Activated CD8-positive, alpha-beta T cell treated with anti-CD3 and anti-CD28 coated beads for 36 hours (primary cell): ENCODE measurements at regions of chr14 and their contacts with region 1.

Region 1: DNA sequence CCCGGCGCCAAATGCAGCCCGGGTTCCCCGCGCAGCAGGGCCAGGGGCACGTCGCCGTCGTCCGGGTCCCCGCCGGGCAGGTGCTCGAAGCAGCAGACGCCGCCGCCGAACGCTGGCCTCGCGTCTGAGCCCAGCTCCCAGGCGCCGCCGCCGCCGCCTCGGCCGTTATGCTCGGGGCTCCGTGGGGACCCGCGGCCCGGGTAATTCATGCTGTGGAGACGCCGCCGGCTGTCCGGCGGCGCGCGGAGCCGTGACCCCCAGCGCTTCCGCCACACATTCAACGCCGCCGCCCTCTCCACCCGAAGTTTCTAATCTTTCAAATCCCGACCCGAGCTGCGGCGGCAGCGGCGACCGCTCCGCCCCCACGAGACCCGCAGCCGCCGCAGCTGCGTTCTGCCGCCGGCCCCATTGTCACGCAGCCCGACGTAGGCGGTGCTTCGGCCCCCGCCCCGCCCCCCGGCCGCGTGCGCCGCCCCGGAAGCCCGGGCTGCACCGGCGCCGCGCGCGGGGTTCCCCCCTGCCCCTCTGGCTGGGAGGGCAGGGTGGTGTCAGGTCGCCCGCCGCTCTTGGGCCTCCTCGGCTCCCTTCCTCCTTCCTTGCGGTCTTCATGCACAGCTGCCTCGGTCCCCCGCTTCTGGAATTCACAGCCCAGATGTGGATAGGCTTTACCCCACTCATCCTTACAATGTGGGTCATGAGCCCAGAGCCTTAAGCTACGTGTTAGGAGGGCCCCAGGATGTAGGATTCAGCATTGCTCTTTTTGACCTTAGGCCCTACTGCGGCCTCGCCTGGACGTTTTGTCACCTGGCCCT is at the start of gene DDHD1:
- DNase-seq: peak; percentile 83
- ATAC-seq: peak; percentile 82
- H3K4me3 Mint-ChIP-seq: peak within 1 kb of the TSS; percentile 100
- H3K27ac Mint-ChIP-seq: peak within 1 kb of the TSS; percentile 99
- H3K4me1 Mint-ChIP-seq: peaks cover 36% of the 10 kb centered on the region
- H3K27me3 Mint-ChIP-seq: no peaks in the 10 kb centered on the region
- CTCF ChIP-seq: no peak
- total RNA-seq, gene DDHD1: 35.5 to 41.5 TPM

Region 2: GRCh38 chr14:53011053-53011462 is 142.0 kb before region 1 on chr14:
- CTCF ChIA-PET with region 1: no interaction called
- POLR2A ChIA-PET with region 1: no interaction called
- intact Hi-C with region 1: no loop called
- DNase-seq: no peak
- ATAC-seq: no peak
- H3K4me3 Mint-ChIP-seq: no peak overlapping the region
- H3K27ac Mint-ChIP-seq: no peak overlapping the region
- H3K4me1 Mint-ChIP-seq: no peaks in the 10 kb centered on the region
- H3K27me3 Mint-ChIP-seq: peaks cover 8% of the 10 kb centered on the region
- CTCF ChIP-seq: no peak

Region 3: GRCh38 chr14:53055003-53055402 is 98.1 kb before region 1 on chr14:
- CTCF ChIA-PET with region 1: interaction called, 10 read pairs
- POLR2A ChIA-PET with region 1: no interaction called
- intact Hi-C with region 1: loop called (anchors 5 kb)
- DNase-seq: no peak
- ATAC-seq: peak; percentile 66
- H3K4me3 Mint-ChIP-seq: no peak overlapping the region
- H3K27ac Mint-ChIP-seq: no peak overlapping the region
- H3K4me1 Mint-ChIP-seq: peaks cover 1% of the 10 kb centered on the region
- H3K27me3 Mint-ChIP-seq: no peaks in the 10 kb centered on the region
- CTCF ChIP-seq: peak; percentile 87

Region 4: GRCh38 chr14:53109105-53110041 is 43.7 kb before region 1 on chr14:
- CTCF ChIA-PET with region 1: interaction called, 32 read pairs
- POLR2A ChIA-PET with region 1: interaction called, 72 read pairs
- intact Hi-C with region 1: loop called (anchors 1 kb)
- DNase-seq: peak; percentile 84
- ATAC-seq: peak; percentile 86
- H3K4me3 Mint-ChIP-seq: no peak overlapping the region
- H3K27ac Mint-ChIP-seq: no peak overlapping the region
- H3K4me1 Mint-ChIP-seq: peaks cover 27% of the 10 kb centered on the region
- H3K27me3 Mint-ChIP-seq: no peaks in the 10 kb centered on the region
- CTCF ChIP-seq: no peak

Region 5: GRCh38 chr14:53190938-53191337 is 37.8 kb after region 1 on chr14:
- CTCF ChIA-PET with region 1: interaction called, 5 read pairs
- POLR2A ChIA-PET with region 1: interaction called, 33 read pairs
- intact Hi-C with region 1: loop called (anchors 2 kb)
- DNase-seq: peak; percentile 79
- ATAC-seq: peak; percentile 96
- H3K4me3 Mint-ChIP-seq: peak overlapping the region; percentile 36
- H3K27ac Mint-ChIP-seq: peak overlapping the region; percentile 89
- H3K4me1 Mint-ChIP-seq: peaks cover 31% of the 10 kb centered on the region
- H3K27me3 Mint-ChIP-seq: no peaks in the 10 kb centered on the region
- CTCF ChIP-seq: no peak

Region 6: DNA sequence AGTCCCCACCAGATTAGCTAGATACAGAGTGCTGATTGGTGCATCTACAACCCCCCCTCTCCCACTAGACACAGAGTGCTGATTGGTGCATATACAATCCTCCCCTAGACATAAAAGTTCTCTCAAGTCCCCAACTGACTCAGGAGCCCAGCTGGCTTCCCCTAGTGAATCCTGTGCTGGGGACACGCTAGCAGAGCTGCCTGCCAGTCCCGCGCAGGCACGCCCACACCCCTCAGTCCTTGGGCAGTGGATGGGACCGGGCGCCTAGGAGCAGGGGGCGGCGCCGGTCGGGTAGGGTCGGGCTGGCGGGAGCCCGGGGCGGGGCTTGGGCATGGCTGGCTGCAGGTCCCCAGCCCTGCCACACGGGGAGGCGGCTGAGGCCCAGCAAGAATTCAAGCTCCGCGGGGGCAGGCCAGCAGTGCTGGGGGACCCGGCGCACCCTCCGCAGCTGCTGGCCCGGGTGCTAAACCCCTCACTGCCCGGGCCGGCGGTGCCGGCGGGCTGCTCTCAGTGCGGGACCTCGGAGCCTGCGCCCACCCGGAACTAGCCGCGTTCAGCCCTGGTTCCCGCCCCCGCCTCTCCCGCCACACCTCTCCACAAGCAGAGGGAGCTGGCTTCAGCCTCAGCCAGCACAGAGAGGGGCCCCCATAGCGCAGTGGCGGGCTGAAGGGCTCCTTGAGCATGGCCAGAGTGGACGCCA is 64.3 kb after region 1 on chr14:
- CTCF ChIA-PET with region 1: interaction called, 11 read pairs
- POLR2A ChIA-PET with region 1: interaction called, 5 read pairs
- intact Hi-C with region 1: no loop called
- DNase-seq: peak; percentile 87
- ATAC-seq: peak; percentile 99
- H3K4me3 Mint-ChIP-seq: peak overlapping the region; percentile 80
- H3K27ac Mint-ChIP-seq: peak overlapping the region; percentile 79
- H3K4me1 Mint-ChIP-seq: peaks cover 6% of the 10 kb centered on the region
- H3K27me3 Mint-ChIP-seq: no peaks in the 10 kb centered on the region
- CTCF ChIP-seq: peak; percentile 74